Tibial artery (tissue), 4 donors: ENCODE measurements at regions of chr10 and their contacts with region 1.

Region 1: GRCh38 chr10:94213001-94213530 is 149.7 kb downstream of the NOC3L start:
- DNase-seq: peak; percentile 60 to 82
- H3K4me3 ChIP-seq: no peak overlapping the region
- H3K27ac ChIP-seq: peak overlapping the region; percentile 52 to 77
- H3K4me1 ChIP-seq: peaks cover 0 to 95% (median 16%) of the 10 kb centered on the region in 4 donors
- H3K27me3 ChIP-seq: no peaks in the 10 kb centered on the region
- CTCF ChIP-seq: no peak

Region 2: GRCh38 chr10:94088926-94089381 is 124.1 kb before region 1 on chr10:
- intact Hi-C with region 1: loop called (anchors 10 kb)
- DNase-seq: peak in 1 of 2 donors; percentile 22
- H3K4me3 ChIP-seq: peak overlapping the region; percentile 50 to 52
- H3K27ac ChIP-seq: peak overlapping the region; percentile 74 to 79
- H3K4me1 ChIP-seq: peaks cover 0 to 60% (median 19%) of the 10 kb centered on the region in 4 donors
- H3K27me3 ChIP-seq: no peaks in the 10 kb centered on the region
- CTCF ChIP-seq: no peak

Region 3: GRCh38 chr10:94459385-94459784 is 246.3 kb after region 1 on chr10:
- intact Hi-C with region 1: no loop called
- DNase-seq: no peak
- H3K4me3 ChIP-seq: no peak overlapping the region
- H3K27ac ChIP-seq: no peak overlapping the region
- H3K4me1 ChIP-seq: no peaks in the 10 kb centered on the region
- H3K27me3 ChIP-seq: no peaks in the 10 kb centered on the region
- CTCF ChIP-seq: no peak